ENCODE measurements at regions of chr3 and their contacts with region 1.

Region 1: DNA sequence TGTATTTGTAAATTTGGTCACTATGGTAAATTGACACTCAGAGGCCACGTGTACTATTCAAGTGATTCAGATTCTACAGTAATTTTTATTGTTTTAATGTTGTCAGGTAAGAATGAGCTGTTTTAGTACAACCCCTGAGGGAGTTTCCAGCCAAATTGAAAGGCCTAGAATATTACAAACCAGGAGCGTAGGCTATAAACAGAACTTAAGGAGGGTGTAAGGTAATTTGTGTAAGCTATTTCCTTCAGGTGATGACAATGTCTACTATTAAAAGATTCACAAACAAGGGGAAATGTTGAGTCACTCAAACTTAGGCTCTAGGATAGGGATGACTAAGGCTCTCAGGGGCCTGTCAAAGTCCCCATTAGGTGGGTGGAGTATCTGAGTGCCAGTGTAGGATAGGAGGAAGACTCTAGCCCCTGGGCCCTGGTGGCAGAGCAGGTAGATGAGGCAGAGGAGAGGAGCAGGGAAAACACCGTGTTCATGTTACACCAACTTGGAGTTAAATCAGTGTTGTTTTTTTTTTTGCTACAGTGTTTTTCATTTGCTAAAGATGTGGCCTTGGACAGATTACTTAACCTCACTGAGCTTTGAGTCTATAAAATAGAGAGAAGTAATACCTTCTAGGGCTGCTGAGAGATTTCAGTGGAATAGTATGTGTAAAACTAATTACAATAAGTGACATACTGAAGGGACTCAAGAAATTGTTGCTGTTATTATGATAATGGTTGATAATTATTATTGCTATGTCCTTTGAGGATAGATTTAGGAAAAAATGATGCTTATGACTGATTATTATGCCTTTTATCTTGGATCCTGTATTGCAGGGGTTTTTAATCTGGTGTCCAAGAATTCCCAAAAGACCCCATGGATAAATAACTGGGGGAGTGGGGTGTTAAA is 10.3 kb downstream of the TM4SF1 start:
- DNase-seq: peak; percentile 90
- H3K4me3 ChIP-seq: no peak overlapping the region
- H3K27ac ChIP-seq: peak overlapping the region; percentile 39
- H3K4me1 ChIP-seq: peaks cover 52% of the 10 kb centered on the region
- H3K27me3 ChIP-seq: no peaks in the 10 kb centered on the region
- CTCF ChIP-seq: no peak
- POLR2A ChIP-seq: peak; percentile 61

Region 2: GRCh38 chr3:149339931-149340309 is 27.3 kb before region 1 on chr3:
- CTCF ChIA-PET with region 1: interaction called, 12 read pairs
- POLR2A ChIA-PET with region 1: interaction called, 21 read pairs
- dilution Hi-C with region 1: no loop called
- intact Hi-C with region 1: loop called (anchors 1 kb)
- DNase-seq: peak; percentile 99
- H3K4me3 ChIP-seq: peak overlapping the region in 1 of 3 experiments; percentile 45
- H3K27ac ChIP-seq: peak overlapping the region; percentile 99
- H3K4me1 ChIP-seq: peaks cover 54% of the 10 kb centered on the region
- H3K27me3 ChIP-seq: no peaks in the 10 kb centered on the region
- CTCF ChIP-seq: no peak
- POLR2A ChIP-seq: peak; percentile 88

Region 3: DNA sequence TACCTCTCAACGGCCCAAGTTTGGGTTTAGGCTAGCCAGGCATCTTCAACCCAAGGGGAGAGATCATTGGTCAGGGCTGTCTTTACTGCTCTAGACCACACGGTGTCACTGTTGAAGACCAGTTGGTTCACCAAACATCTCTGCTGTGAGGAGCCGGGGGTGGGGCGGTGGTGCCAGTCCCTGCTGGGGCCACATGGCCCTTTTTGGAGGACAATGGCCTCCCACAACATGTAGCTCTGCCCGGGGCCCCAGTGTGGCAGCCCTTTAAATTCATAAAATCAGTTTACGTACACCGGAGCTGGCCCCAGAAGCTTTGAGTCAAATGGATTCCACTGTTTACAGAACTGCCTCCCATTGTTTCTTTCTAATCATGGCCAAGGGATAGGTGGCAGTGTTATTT is 14.6 kb before region 1 on chr3:
- CTCF ChIA-PET with region 1: interaction called, 15 read pairs
- POLR2A ChIA-PET with region 1: interaction called, 7 read pairs
- dilution Hi-C with region 1: no loop called
- intact Hi-C with region 1: loop called (anchors 1 kb)
- DNase-seq: peak; percentile 70
- H3K4me3 ChIP-seq: no peak overlapping the region
- H3K27ac ChIP-seq: no peak overlapping the region
- H3K4me1 ChIP-seq: peaks cover 12% of the 10 kb centered on the region
- H3K27me3 ChIP-seq: no peaks in the 10 kb centered on the region
- CTCF ChIP-seq: peak; percentile 74
- POLR2A ChIP-seq: no peak

Region 4: DNA sequence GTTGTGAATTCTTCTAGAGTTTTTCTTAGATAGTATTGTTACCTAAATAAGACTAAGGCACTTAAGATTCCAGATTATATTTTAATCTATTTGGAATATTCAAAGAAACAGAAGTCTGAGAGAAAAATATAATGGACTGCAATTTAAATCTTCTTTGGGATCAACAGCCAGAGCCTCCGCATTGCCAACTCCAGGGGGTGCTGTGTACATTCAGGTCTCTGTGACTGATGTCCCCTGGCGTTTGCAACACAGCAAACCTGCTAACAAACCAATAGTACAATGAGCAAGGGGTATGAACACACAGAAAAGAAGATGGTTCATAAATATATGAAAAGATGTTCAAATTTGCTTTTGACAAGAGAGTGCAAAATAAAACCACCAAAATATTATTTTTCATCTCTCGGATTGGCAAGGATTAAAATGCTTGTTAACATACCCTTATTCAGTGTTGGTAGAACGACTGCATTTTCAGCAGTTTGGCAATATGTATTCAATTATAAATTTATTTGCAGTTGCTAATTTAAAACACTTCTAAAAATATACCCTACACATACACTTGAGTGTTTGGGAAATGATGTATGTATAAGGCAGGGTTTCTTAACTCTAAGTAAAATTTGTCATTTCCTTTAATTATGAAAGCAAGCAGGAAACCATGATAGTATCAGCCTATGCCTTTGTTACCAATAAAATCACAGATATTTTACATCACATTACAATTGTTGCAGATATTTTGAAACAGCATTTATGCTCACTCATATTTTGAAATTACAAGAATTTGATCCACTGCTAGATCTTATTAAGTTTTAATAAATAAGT is 26.4 kb after region 1 on chr3:
- CTCF ChIA-PET with region 1: interaction called, 5 read pairs
- POLR2A ChIA-PET with region 1: interaction called, 4 read pairs
- dilution Hi-C with region 1: no loop called
- intact Hi-C with region 1: loop called (anchors 1 kb)
- DNase-seq: peak; percentile 88
- H3K4me3 ChIP-seq: peak overlapping the region in 1 of 3 experiments; percentile 21
- H3K27ac ChIP-seq: peak overlapping the region; percentile 90
- H3K4me1 ChIP-seq: peaks cover 31% of the 10 kb centered on the region
- H3K27me3 ChIP-seq: no peaks in the 10 kb centered on the region
- CTCF ChIP-seq: peak; percentile 84
- POLR2A ChIP-seq: no peak

Region 5: DNA sequence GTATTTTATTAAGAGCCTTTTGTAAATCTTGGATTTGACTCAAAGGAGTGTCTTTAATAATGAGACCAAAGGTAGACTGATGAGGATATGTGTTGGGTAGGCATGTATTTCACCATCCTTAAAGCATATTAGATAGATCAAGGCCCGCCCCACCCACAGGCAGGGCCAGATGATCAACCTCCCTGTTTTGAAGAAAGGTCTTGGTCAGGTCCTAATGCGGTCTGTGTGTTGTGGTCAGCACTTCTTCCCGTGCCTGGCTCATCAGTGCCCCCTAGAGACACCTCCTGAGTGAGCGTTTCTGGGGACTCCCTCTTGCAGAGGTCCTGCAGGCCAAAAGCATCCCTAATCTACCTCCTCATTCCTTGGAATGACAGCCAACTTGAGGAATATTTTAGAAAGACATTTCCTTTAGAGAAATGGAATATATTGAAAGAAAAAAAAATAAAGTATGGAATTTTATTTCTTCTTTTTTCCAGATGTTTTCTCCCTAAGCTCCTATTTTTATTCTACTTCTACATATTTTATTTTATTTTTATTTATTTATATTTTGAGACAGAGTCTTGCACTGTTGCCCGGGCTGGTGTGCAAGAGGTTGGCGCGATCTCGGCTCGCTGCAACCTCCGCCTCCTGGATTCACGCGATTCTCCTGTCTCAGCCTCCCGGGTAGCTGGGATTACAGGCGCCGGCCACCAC is 113.3 kb after region 1 on chr3:
- CTCF ChIA-PET with region 1: interaction called, 125 read pairs
- POLR2A ChIA-PET with region 1: interaction called, 41 read pairs
- dilution Hi-C with region 1: no loop called
- intact Hi-C with region 1: loop called (anchors 1 kb)
- DNase-seq: peak; percentile 93
- H3K4me3 ChIP-seq: no peak overlapping the region
- H3K27ac ChIP-seq: peak overlapping the region; percentile 64
- H3K4me1 ChIP-seq: peaks cover 12% of the 10 kb centered on the region
- H3K27me3 ChIP-seq: no peaks in the 10 kb centered on the region
- CTCF ChIP-seq: peak; percentile 91 to 93
- POLR2A ChIP-seq: no peak

Region 6: GRCh38 chr3:149487598-149488197 is 120.5 kb after region 1 on chr3:
- CTCF ChIA-PET with region 1: interaction called, 125 read pairs
- POLR2A ChIA-PET with region 1: interaction called, 5 read pairs
- dilution Hi-C with region 1: no loop called
- intact Hi-C with region 1: no loop called
- DNase-seq: no peak
- H3K4me3 ChIP-seq: no peak overlapping the region
- H3K27ac ChIP-seq: no peak overlapping the region
- H3K4me1 ChIP-seq: peaks cover 3% of the 10 kb centered on the region
- H3K27me3 ChIP-seq: no peaks in the 10 kb centered on the region
- CTCF ChIP-seq: peak; percentile 40 to 53
- POLR2A ChIP-seq: no peak

Measured in endothelial cell of umbilical vein (primary cell).